ENCODE measurements at regions of chr14 and their contacts with region 1.

Region 1: GRCh38 chr14:102316743-102317563 is 2.6 kb upstream of the ZNF839 start:
- DNase-seq: peak; percentile 92 to 99
- H3K4me3 ChIP-seq: peak overlapping the region; percentile 25
- CTCF ChIP-seq: peak in 1 of 3 donors; percentile 81
- POLR2A ChIP-seq: no peak

Region 2: GRCh38 chr14:101964297-101965144 is 352.4 kb before region 1 on chr14 and contains the start of gene DYNC1H1:
- intact Hi-C with region 1: loop called (anchors 10 kb)
- DNase-seq: peak; percentile 87 to 98
- H3K4me3 ChIP-seq: peak within 1 kb of the TSS; percentile 99
- CTCF ChIP-seq: no peak
- POLR2A ChIP-seq: peak in 1 of 2 donors; percentile 92
- total RNA-seq, gene DYNC1H1: 546 to 624 (median 593) TPM

Region 3: GRCh38 chr14:102164241-102164641 is 152.7 kb before region 1 on chr14:
- intact Hi-C with region 1: no loop called
- DNase-seq: no peak
- H3K4me3 ChIP-seq: no peak overlapping the region
- CTCF ChIP-seq: no peak
- POLR2A ChIP-seq: no peak

Measured in lower leg skin (tissue), 4 donors.